Common myeloid progenitor, CD34-positive (primary cell): ENCODE measurements at regions of chr17 and their contacts with region 1.

Region 1: GRCh38 chr17:48647103-48647962 is 21.2 kb upstream of the HOXB9 start:
- DNase-seq: peak in 2 of 3 donors; percentile 47 to 54
- H3K4me3 ChIP-seq: peak overlapping the region; percentile 21 to 79 (median 65)
- H3K27ac ChIP-seq: no peak overlapping the region
- H3K4me1 ChIP-seq: peaks cover 3 to 19% (median 17%) of the 10 kb centered on the region in 4 experiments
- H3K27me3 ChIP-seq: peaks cover 26 to 80% (median 45%) of the 10 kb centered on the region in 5 experiments

Region 2: DNA sequence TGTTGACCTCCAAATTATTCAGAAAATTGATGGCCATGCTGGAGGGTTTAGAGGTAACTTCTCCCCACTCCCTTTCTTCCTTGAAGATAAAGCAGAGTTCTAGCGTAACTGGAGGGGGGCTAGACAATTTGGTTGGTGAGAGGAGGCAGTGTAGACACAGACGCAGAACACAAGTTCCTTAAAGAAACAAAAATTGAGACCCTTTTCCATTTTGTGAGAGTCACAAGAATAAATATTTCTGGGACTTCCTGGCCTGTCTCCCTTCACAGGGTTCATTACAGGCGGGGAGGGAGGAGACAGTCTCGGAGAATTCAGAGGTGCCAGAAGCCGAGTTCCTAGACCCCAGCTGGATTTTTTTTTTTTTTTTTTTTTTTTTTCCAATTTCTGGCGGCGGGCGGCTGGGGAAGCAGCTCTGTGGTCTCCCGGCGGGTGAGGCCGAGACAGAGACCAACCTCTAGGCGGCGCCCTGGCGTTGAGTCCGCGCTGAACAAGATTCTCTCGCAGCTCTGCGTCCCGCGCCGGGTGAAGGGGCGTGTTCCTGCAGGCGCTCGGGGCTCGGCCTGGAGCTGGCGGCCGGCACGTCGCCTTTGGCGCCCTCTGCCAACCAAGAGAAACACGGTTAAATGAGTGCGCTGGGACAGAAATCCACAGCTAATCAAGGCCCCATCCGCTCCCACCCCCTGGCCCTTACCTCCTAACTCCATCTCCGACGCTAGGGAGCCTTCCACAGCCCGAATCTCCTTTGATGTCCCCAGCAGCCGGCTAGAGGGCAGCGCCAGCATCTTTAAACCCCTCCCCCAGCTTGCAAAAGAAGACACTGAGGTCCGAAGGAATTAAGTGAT is 10.9 kb before region 1 on chr17:
- CTCF ChIA-PET with region 1: interaction called, 15 read pairs
- POLR2A ChIA-PET with region 1: no interaction called
- DNase-seq: peak; percentile 91 to 92 (median 91)
- H3K4me3 ChIP-seq: peak overlapping the region in 2 of 7 experiments; percentile 8 to 42
- H3K27ac ChIP-seq: no peak overlapping the region
- H3K4me1 ChIP-seq: peaks cover 0 to 14% (median 6%) of the 10 kb centered on the region in 4 experiments
- H3K27me3 ChIP-seq: peaks cover 6 to 97% (median 67%) of the 10 kb centered on the region in 5 experiments

Region 3: GRCh38 chr17:49013311-49014213 is 366.2 kb after region 1 on chr17:
- CTCF ChIA-PET with region 1: no interaction called
- POLR2A ChIA-PET with region 1: no interaction called
- DNase-seq: no peak
- H3K4me3 ChIP-seq: no peak overlapping the region
- H3K27ac ChIP-seq: no peak overlapping the region
- H3K4me1 ChIP-seq: peaks cover 0 to 8% (median 1%) of the 10 kb centered on the region in 4 experiments
- H3K27me3 ChIP-seq: peaks cover 0 to 78% (median 23%) of the 10 kb centered on the region in 5 experiments